PC-9 (cell line): ENCODE measurements at regions of chr7 and their contacts with region 1.

Region 1: GRCh38 chr7:54967384-54967783 is 51.4 kb upstream of the EGFR start:
- DNase-seq: peak; percentile 92 to 100
- H3K4me3 ChIP-seq: peak overlapping the region; percentile 2; the same call in 1 of the 2 replicates
- H3K27ac ChIP-seq: peak overlapping the region; percentile 89
- H3K4me1 ChIP-seq: peaks cover 50% of the 10 kb centered on the region
- H3K27me3 ChIP-seq: no peaks in the 10 kb centered on the region
- CTCF ChIP-seq: no peak

Region 2: GRCh38 chr7:54831644-54832099 is 135.7 kb before region 1 on chr7:
- CTCF ChIA-PET with region 1: no interaction called
- POLR2A ChIA-PET with region 1: interaction called, 4 read pairs
- intact Hi-C with region 1: loop called (anchors 1 kb)
- DNase-seq: peak; percentile 86 to 100
- H3K4me3 ChIP-seq: peak overlapping the region; percentile 39; the same call in 1 of the 2 replicates
- H3K27ac ChIP-seq: peak overlapping the region; percentile 94
- H3K4me1 ChIP-seq: peaks cover 45% of the 10 kb centered on the region
- H3K27me3 ChIP-seq: no peaks in the 10 kb centered on the region
- CTCF ChIP-seq: no peak; the same call in none of the 2 replicates

Region 3: DNA sequence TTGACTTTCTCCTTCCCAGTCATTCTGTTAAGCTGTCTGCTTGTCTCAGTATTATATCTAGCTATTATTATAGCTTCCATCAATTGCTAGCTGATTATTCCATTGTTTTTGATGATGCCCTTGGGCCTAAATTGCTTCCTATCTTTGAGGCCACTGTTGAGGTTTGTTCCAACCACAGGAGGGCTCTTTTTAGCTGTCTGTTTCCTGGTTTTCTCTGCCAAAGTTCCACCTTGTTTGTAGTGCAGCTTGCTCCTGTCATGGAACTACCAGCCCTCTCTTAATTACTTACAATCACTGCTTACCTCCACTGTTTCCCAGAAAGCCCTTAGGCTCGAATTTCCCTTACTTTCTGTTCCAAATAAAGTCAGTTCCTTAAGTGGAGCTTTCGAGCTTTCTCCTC is 89.7 kb before region 1 on chr7:
- CTCF ChIA-PET with region 1: interaction called, 4 read pairs
- POLR2A ChIA-PET with region 1: interaction called, 5 read pairs
- intact Hi-C with region 1: loop called (anchors 5 kb)
- DNase-seq: peak; percentile 35 to 73
- H3K4me3 ChIP-seq: no peak overlapping the region
- H3K27ac ChIP-seq: no peak overlapping the region
- H3K4me1 ChIP-seq: peaks cover 8% of the 10 kb centered on the region
- H3K27me3 ChIP-seq: no peaks in the 10 kb centered on the region
- CTCF ChIP-seq: peak; percentile 67

Region 4: GRCh38 chr7:54946749-54947148 is 20.6 kb before region 1 on chr7:
- CTCF ChIA-PET with region 1: no interaction called
- POLR2A ChIA-PET with region 1: interaction called, 3 read pairs
- intact Hi-C with region 1: loop called (anchors 1 kb)
- DNase-seq: peak; percentile 48 to 88
- H3K4me3 ChIP-seq: no peak overlapping the region
- H3K27ac ChIP-seq: peak overlapping the region; percentile 44
- H3K4me1 ChIP-seq: peaks cover 19% of the 10 kb centered on the region
- H3K27me3 ChIP-seq: no peaks in the 10 kb centered on the region
- CTCF ChIP-seq: no peak

Region 5: DNA sequence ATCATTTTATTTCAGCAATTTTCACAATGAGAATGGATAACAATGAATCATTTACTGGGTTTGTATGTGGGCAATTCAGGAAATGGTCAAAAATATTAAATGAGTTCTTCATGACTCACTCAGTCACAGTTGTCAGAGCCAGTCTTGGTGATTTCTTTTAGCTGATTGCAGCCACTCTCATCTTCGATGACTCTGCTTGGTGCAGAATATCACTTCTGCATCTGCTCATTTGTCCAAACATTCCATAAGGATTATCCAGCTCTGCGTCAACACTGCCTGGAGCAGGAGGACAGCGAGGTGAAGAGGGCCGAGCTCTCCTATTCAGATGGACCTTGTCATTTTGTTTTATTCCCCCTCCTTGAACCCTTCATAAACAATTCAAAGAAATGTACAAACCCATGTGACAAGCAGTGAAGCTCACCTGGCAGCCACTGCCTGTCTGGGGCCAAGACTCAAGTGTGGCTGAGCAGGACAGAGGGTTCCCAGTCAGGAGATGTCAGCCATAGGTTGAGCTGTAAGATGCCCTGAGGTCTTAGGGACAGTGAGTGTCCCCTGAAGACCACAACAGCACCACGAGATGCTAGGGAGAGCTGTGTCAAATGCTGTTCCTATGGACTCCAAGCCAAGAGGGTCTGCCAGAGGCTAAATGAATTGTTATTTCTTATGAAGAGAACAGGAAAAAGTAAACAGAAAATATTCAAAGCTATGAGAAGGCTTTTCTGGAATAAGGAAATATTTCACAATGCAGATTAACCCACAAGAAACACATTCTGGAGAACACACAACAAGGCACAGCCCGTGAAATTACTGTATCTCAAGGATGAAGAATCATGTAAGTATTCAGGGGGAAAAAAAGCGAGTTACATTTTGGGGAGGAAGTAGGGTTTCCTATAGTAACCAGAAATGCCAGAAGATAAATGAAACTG is 18.3 kb after region 1 on chr7:
- CTCF ChIA-PET with region 1: no interaction called
- POLR2A ChIA-PET with region 1: interaction called, 18 read pairs
- intact Hi-C with region 1: loop called (anchors 1 kb)
- DNase-seq: peak; percentile 75 to 100
- H3K4me3 ChIP-seq: peak overlapping the region; percentile 38; the same call in 1 of the 2 replicates
- H3K27ac ChIP-seq: peak overlapping the region; percentile 89
- H3K4me1 ChIP-seq: peaks cover 51% of the 10 kb centered on the region
- H3K27me3 ChIP-seq: no peaks in the 10 kb centered on the region
- CTCF ChIP-seq: no peak

Region 6: DNA sequence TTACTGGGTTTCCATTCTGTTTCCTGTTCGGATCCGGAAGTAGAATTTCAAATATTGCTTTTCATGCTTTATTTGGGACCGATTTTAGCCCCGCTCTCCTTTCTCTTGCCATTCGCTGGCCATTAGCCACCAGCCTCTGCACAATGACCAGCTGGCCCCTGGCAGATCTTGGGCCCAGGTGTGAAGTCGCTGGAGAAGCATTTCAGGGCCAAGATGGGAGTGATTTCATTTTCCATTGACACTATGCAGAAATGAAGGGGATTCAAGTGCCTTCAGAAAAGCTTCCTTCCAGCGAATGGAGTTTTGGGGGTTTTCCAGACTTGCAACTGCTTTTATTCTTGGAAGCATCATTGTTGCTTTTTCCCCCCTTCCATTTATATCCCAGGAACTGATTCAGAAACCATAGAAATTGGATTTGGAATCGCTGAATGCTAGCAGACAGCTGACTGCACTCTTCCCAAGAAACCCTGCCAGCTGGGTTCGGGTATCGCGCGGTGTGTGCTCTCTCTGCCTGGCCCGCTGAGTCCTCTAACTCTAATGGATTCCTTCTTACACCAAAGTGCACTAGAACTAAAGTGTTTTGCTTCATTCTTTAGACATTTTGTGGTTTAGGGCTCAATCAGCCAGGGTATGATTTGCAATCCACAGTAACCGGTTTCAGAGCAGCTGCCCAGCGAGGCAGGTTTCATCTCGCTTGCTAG is 143.4 kb after region 1 on chr7:
- CTCF ChIA-PET with region 1: no interaction called
- POLR2A ChIA-PET with region 1: no interaction called
- intact Hi-C with region 1: loop called (anchors 1 kb)
- DNase-seq: peak; percentile 68 to 71
- H3K4me3 ChIP-seq: no peak overlapping the region
- H3K27ac ChIP-seq: peak overlapping the region; percentile 2; the same call in 1 of the 2 replicates
- H3K4me1 ChIP-seq: peaks cover 50% of the 10 kb centered on the region
- H3K27me3 ChIP-seq: no peaks in the 10 kb centered on the region
- CTCF ChIP-seq: no peak

Region 7: GRCh38 chr7:55349121-55349520 is 381.7 kb after region 1 on chr7:
- CTCF ChIA-PET with region 1: no interaction called
- POLR2A ChIA-PET with region 1: interaction called, 11 read pairs
- intact Hi-C with region 1: no loop called
- DNase-seq: no peak
- H3K4me3 ChIP-seq: no peak overlapping the region
- H3K27ac ChIP-seq: no peak overlapping the region
- H3K4me1 ChIP-seq: peaks cover 13% of the 10 kb centered on the region
- H3K27me3 ChIP-seq: peaks cover 29% of the 10 kb centered on the region
- CTCF ChIP-seq: no peak